PC-3 (cell line): ENCODE measurements at regions of chr7 and their contacts with region 1.

Region 1: GRCh38 chr7:111873963-111874690 is 311.8 kb upstream of the IMMP2L start:
- DNase-seq: no peak
- ATAC-seq: no peak
- H3K4me3 ChIP-seq: no peak overlapping the region
- H3K27ac ChIP-seq: no peak overlapping the region
- H3K4me1 ChIP-seq: no peaks in the 10 kb centered on the region
- H3K27me3 ChIP-seq: no peaks in the 10 kb centered on the region
- CTCF ChIP-seq: no peak

Region 2: DNA sequence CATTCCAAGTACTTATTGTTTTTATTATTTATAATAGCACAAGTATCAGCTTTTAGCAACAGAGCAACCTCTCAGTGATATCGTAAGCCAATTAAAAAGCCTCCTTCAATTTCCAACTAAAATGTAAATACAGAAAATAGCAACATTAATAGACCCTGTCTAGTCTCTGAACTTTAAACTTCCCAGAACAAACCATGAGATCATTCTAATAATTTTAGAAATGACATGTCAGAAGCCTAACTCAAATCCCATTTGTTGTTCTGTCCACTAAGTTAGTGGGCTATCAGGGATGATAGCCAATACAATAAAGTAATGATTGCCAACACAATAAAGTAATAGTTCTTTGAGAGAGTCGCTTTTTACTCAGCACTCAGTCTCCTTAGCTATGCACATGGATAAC is 805.5 kb before region 1 on chr7:
- CTCF ChIA-PET with region 1: no interaction called
- POLR2A ChIA-PET with region 1: interaction called, 10 read pairs
- intact Hi-C with region 1: no loop called
- DNase-seq: no peak
- ATAC-seq: no peak
- H3K4me3 ChIP-seq: no peak overlapping the region
- H3K27ac ChIP-seq: no peak overlapping the region
- H3K4me1 ChIP-seq: no peaks in the 10 kb centered on the region
- H3K27me3 ChIP-seq: no peaks in the 10 kb centered on the region
- CTCF ChIP-seq: no peak

Region 3: DNA sequence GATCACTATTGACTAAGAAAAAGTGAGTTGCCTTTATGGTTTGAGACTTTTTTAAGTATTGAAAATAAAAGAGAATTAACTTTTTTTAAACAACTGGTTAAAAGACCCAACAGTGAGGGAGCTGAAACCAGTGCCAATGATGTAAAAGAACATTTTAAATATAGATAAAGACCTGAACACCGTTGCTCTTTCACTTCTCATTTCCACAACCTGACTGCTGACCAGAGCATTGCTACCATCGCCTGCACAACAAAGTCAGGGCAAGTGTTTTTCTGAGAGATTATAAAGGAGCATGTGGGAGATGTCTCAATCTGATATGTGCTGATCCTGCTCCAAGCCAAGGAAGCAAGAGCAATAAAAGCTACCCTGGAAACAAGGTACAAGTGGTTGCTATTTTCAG is 346.6 kb before region 1 on chr7:
- CTCF ChIA-PET with region 1: no interaction called
- POLR2A ChIA-PET with region 1: no interaction called
- intact Hi-C with region 1: no loop called
- DNase-seq: no peak
- ATAC-seq: no peak
- H3K4me3 ChIP-seq: no peak overlapping the region
- H3K27ac ChIP-seq: peak overlapping the region; percentile 95
- H3K4me1 ChIP-seq: peaks cover 33% of the 10 kb centered on the region
- H3K27me3 ChIP-seq: no peaks in the 10 kb centered on the region
- CTCF ChIP-seq: no peak